CD8-positive, alpha-beta T cell (primary cell): ENCODE measurements at regions of chr2 and their contacts with region 1.

Region 1: DNA sequence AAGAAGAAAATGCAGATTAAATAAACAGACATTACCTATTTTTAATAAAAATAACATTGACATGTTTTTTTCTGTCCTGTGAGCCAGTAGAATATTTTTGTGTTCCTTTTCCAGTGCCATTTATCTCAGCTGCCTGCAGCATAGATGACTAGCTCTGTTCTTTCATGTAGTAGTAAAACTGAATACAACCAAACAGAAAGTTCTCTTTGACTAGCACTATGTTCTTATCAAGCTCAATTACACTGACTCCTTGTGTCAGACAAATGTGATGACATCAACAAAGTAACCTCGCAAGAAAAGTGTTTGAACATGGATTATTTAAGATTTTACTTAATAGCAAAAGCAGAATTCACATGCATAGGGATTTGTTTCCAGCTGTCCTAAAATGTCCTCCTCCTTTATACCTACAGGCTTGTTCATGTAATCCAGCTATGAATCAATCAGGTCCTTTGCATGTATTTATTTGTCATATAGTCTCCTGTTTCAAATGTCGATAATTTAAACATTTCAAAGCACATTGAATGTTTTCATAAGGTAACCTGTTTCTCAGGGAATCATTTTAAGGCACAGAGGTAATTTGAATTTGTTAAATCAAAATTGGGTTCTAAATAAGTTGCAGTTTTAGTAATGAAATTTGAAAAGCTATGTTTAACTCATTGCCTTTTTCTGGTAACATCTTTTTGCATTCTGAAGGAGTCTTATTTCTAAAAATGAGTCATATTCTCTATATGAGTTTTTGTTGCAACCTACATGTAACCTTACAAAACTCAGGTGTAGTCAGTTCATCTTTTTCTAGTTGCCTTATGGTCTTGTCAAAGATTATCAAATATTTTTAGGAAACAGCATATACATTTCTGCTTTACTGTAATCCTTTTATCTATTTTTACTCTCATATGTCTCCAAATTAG is 215.3 kb upstream of the GULP1 start:
- DNase-seq: no peak
- ATAC-seq: no peak
- H3K4me3 ChIP-seq: no peak overlapping the region
- H3K4me3 Mint-ChIP-seq: no peak overlapping the region
- H3K27ac ChIP-seq: no peak overlapping the region
- H3K27ac Mint-ChIP-seq: no peak overlapping the region
- H3K4me1 ChIP-seq: no peaks in the 10 kb centered on the region
- H3K4me1 Mint-ChIP-seq: no peaks in the 10 kb centered on the region
- H3K27me3 ChIP-seq: no peaks in the 10 kb centered on the region
- H3K27me3 Mint-ChIP-seq: no peaks in the 10 kb centered on the region
- CTCF ChIP-seq: no peak

Region 2: DNA sequence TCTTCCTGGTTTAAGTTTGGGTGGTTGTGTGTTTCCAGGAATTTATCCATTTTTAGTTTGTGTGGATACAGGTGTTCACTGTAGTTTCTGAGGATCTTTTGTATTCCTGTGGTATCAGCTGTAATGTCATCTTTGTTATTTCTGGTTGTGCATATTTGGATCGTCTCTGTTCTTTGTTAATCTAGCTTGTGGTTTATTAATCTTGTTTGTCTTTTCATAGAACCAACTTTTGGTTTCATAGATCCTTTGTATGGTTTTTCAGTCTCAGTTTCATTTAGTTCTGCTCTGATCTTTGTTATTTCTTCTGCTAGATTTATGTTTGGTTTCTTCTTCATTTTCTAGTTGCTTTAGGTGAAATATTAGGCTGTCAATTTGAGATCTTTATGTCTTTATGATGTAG is 1025.1 kb before region 1 on chr2:
- CTCF ChIA-PET with region 1: no interaction called
- POLR2A ChIA-PET with region 1: no interaction called
- intact Hi-C with region 1: no loop called
- DNase-seq: no peak
- ATAC-seq: no peak
- H3K4me3 ChIP-seq: no peak overlapping the region
- H3K4me3 Mint-ChIP-seq: no peak overlapping the region
- H3K27ac ChIP-seq: no peak overlapping the region
- H3K27ac Mint-ChIP-seq: no peak overlapping the region
- H3K4me1 ChIP-seq: no peaks in the 10 kb centered on the region
- H3K4me1 Mint-ChIP-seq: no peaks in the 10 kb centered on the region
- H3K27me3 ChIP-seq: no peaks in the 10 kb centered on the region
- H3K27me3 Mint-ChIP-seq: no peaks in the 10 kb centered on the region
- CTCF ChIP-seq: no peak

Region 3: DNA sequence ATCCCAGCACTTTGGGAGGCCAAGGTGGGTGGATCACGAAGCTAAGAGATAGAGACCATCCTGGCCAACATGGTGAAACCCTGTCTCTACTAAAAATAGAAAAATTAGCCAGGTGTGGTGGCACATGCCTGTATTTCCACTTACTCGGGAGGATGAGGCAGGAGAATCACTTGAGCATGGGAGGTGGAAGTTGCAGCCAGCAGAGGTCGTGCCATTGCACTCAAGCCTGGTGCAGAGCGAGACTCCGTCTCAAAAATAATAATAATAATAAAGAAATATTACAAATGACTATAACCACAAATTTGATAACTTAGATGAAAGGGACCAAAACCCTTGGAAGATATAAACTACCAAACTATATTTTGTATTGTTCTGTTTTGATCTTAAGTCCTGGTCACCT is 11.0 kb before region 1 on chr2:
- CTCF ChIA-PET with region 1: no interaction called
- POLR2A ChIA-PET with region 1: no interaction called
- intact Hi-C with region 1: loop called in 1 of 2 experiments (anchors 2 kb)
- DNase-seq: no peak
- ATAC-seq: no peak
- H3K4me3 ChIP-seq: no peak overlapping the region
- H3K4me3 Mint-ChIP-seq: no peak overlapping the region
- H3K27ac ChIP-seq: no peak overlapping the region
- H3K27ac Mint-ChIP-seq: no peak overlapping the region
- H3K4me1 ChIP-seq: no peaks in the 10 kb centered on the region
- H3K4me1 Mint-ChIP-seq: no peaks in the 10 kb centered on the region
- H3K27me3 ChIP-seq: no peaks in the 10 kb centered on the region
- H3K27me3 Mint-ChIP-seq: no peaks in the 10 kb centered on the region
- CTCF ChIP-seq: no peak

Region 4: DNA sequence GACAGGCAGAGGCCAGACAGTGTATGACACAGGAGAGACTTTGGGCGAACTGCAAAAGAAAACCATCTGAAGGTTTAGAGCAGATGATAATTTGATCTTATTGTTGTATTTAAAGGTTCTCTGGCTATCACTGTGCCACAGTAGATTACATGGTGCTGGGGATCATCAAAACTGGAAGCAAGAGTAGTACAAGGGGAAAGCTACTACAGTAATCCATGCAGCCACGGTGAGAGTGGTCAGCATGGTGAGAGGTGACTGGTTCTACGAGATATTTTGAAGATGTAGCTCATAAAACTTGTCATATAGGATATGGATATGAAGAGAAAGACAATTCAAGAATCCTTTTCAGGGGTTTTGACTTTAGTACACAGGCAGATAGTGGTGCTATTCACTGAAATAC is 20.5 kb after region 1 on chr2:
- CTCF ChIA-PET with region 1: no interaction called
- POLR2A ChIA-PET with region 1: no interaction called
- intact Hi-C with region 1: no loop called
- DNase-seq: no peak
- ATAC-seq: no peak
- H3K4me3 ChIP-seq: no peak overlapping the region
- H3K4me3 Mint-ChIP-seq: no peak overlapping the region
- H3K27ac ChIP-seq: no peak overlapping the region
- H3K27ac Mint-ChIP-seq: no peak overlapping the region
- H3K4me1 ChIP-seq: no peaks in the 10 kb centered on the region
- H3K4me1 Mint-ChIP-seq: no peaks in the 10 kb centered on the region
- H3K27me3 ChIP-seq: no peaks in the 10 kb centered on the region
- H3K27me3 Mint-ChIP-seq: no peaks in the 10 kb centered on the region
- CTCF ChIP-seq: no peak